Activated CD4-positive, alpha-beta T cell treated with anti-CD3 and anti-CD28 coated beads for 36 hours (primary cell): ENCODE measurements at regions of chrX and their contacts with region 1.

Region 1: GRCh38 chrX:115330498-115331168 is 41.1 kb downstream of the LUZP4 start:
- DNase-seq: peak; percentile 29
- ATAC-seq: no peak
- H3K4me3 Mint-ChIP-seq: no peak overlapping the region
- H3K27ac Mint-ChIP-seq: no peak overlapping the region
- H3K4me1 Mint-ChIP-seq: no peaks in the 10 kb centered on the region
- H3K27me3 Mint-ChIP-seq: no peaks in the 10 kb centered on the region

Region 2: GRCh38 chrX:115189646-115190635 is 140.7 kb before region 1 on chrX:
- CTCF ChIA-PET with region 1: no interaction called
- POLR2A ChIA-PET with region 1: no interaction called
- intact Hi-C with region 1: no loop called
- DNase-seq: no peak
- ATAC-seq: no peak
- H3K4me3 Mint-ChIP-seq: no peak overlapping the region
- H3K27ac Mint-ChIP-seq: no peak overlapping the region
- H3K4me1 Mint-ChIP-seq: no peaks in the 10 kb centered on the region
- H3K27me3 Mint-ChIP-seq: no peaks in the 10 kb centered on the region

Region 3: DNA sequence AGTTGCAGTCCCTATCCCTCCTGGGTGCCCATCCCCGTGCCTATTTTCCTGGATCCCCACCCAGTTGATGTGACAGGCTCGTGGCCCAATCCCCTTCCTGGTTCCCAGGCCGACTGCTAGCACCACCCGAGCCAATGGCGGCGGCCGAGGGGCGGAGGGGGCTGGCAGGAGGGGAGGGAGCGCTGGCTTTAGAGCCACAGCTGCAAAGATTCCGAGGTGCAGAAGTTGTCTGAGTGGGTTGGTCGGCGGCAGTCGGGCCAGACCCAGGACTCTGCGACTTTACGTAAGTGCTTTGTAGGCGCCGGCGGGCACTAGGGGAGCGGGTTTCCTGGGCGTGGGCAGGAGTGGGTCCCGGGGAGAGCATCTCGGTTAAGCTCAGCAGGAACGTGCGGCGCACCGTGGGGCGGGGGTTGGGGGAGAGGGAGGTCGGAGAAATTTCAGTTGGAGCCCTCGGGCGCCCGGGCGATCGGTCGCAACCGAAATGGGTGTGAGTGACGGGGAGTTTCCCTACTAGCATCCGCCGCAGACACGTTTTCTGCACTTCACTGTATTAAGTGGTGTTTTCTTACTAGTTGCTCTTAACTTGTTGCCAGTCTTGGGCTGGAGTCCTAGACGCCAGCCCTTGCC is 230.5 kb after region 1 on chrX and contains the start of gene PLS3:
- CTCF ChIA-PET with region 1: interaction called, 4 read pairs
- POLR2A ChIA-PET with region 1: no interaction called
- intact Hi-C with region 1: loop called in 1 of 2 experiments (anchors 5 kb)
- DNase-seq: peak; percentile 43
- ATAC-seq: peak; percentile 61
- H3K4me3 Mint-ChIP-seq: peak within 1 kb of the TSS; percentile 57
- H3K27ac Mint-ChIP-seq: no peak within 1 kb of the TSS
- H3K4me1 Mint-ChIP-seq: no peaks in the 10 kb centered on the region
- H3K27me3 Mint-ChIP-seq: peaks cover 23% of the 10 kb centered on the region
- total RNA-seq, gene PLS3: 3.1 to 3.2 TPM

Region 4: GRCh38 chrX:115690511-115691216 is 360.0 kb after region 1 on chrX:
- CTCF ChIA-PET with region 1: interaction called, 4 read pairs
- POLR2A ChIA-PET with region 1: no interaction called
- intact Hi-C with region 1: loop called (anchors 1 to 2 kb)
- DNase-seq: peak; percentile 58
- ATAC-seq: peak; percentile 55
- H3K4me3 Mint-ChIP-seq: no peak overlapping the region
- H3K27ac Mint-ChIP-seq: no peak overlapping the region
- H3K4me1 Mint-ChIP-seq: no peaks in the 10 kb centered on the region
- H3K27me3 Mint-ChIP-seq: no peaks in the 10 kb centered on the region